Sigmoid colon (tissue), 7 donors: ENCODE measurements at regions of chr1 and their contacts with region 1.

Region 1: GRCh38 chr1:115158181-115158580 is 68.9 kb upstream of the TSPAN2 start:
- DNase-seq: no peak
- H3K4me3 ChIP-seq: no peak overlapping the region
- H3K27ac ChIP-seq: peak overlapping the region in 3 of 4 donors; percentile 31 to 44 (median 41)
- H3K4me1 ChIP-seq: peaks cover 0 to 37% (median 23%) of the 10 kb centered on the region in 4 donors
- H3K27me3 ChIP-seq: no peaks in the 10 kb centered on the region
- CTCF ChIP-seq: no peak
- EP300 ChIP-seq: no peak
- POLR2A ChIP-seq: no peak

Region 2: GRCh38 chr1:115246526-115246925 is 88.3 kb after region 1 on chr1:
- intact Hi-C with region 1: loop called (anchors 10 kb)
- DNase-seq: no peak
- H3K4me3 ChIP-seq: no peak overlapping the region
- H3K27ac ChIP-seq: no peak overlapping the region
- H3K4me1 ChIP-seq: peaks cover 0 to 9% (median 3%) of the 10 kb centered on the region in 4 donors
- H3K27me3 ChIP-seq: no peaks in the 10 kb centered on the region
- CTCF ChIP-seq: no peak
- EP300 ChIP-seq: no peak
- POLR2A ChIP-seq: no peak